GM13977 (cell line): ENCODE measurements at regions of chr10 and their contacts with region 1.

Region 1: DNA sequence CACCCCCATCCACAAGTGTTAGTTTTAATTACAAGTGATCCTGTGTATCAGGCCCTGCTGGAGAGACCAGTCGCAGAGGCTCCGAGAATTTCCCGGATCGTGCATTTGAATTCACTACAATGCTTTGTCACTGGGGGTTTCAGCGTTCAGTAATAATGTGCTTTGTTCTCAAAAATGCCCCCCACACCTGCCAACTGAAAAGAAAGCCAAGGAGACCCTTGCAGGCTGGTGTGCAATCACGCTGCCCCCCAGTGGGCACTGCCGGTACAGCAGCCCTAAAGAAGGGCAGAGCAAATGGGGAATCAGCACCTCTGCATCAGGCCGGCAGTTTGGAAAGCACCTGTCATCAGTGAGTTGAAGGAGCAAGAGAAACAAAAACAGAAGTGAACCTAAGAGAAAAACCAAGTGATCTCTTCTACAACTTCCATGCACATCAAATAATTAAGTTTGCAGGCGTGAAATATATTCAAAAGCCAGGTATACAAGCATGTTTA is 177.6 kb downstream of the PARD3 start:
- DNase-seq: peak; percentile 67
- CTCF ChIP-seq: peak; percentile 98

Region 2: DNA sequence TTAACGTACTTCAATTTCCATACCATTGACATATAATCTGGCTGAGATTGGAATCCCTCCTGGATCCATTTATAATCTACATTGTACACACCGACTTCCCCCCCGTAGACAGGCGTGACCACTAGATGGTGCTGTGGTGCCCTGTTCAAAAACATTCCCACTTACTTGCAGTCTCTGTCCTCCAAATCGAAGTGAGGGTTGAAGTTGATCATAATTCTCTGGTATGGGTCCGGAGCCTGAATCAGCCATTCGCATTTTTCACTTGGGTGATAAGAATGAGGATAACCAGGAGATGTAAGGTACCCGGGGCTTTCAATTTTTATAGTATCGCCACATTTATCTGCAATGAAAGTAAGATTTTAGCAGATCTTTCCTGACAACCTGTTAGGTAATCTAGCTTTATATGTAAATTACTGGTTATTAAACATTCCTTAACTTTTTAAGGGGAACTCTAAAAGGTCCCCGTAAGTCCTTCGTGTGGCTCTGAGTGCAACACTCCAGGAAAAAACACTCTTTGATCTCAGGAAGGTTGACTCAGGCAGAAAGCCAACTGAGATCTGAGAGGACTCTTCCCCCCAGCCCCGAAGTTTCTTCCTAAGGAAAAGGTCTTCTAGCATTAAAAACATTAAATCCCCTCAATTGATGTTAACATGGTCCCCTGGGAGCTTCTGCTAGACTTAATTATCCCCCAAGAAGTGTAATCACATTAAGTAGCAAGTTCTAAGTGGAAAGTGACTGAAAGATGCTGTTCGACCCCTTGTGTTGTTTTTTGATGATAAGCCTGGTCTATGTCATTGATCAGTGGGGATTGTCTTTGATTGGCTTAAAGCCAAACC is 1306.7 kb before region 1 on chr10:
- in situ Hi-C with region 1: loop called (anchors 10 kb)
- DNase-seq: peak; percentile 69
- CTCF ChIP-seq: peak; percentile 94

Region 3: DNA sequence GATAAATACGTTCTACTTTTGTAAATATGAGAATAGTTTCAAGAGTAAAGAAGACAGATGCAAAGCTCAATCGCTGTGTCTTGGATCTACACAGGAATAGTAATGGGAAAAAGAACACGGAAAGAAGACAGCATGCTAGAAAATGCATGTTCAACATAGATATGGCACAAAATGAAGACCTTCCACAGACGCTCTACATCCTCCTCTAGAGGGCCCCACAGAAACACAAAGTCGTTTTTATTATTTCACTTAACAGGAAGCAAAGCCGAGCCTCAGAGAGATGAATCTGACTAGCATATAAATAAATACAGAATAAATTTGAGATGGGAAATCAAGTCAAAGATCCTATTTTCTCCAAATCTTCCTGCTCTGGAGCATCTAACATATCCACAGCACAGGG is 114.9 kb before region 1 on chr10:
- in situ Hi-C with region 1: loop called (anchors 25 kb)
- DNase-seq: peak; percentile 19
- CTCF ChIP-seq: peak; percentile 53